ENCODE measurements at regions of chr3 and their contacts with region 1.

Region 1: DNA sequence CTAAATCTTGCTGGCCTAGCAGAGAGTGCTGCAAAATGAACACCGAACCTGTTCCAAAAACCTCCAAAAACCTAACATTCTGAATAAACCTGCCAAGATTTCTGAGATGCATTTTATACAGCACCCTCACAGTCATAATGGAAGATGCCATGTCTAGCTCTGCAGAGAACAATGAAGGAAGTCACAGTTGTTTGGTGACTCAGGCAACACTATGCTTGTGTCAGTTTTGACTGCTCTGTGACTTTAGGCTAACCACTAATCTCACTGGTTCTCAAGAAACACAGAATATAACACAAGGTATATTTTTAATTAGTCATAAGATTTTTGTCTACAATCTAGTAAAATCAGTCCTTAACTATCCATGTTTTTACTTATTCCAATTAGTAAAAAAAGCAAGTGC is 606.6 kb downstream of the TBL1XR1 start:
- DNase-seq: peak; percentile 26
- ATAC-seq: peak; percentile 87
- H3K4me3 ChIP-seq: no peak overlapping the region
- H3K27ac ChIP-seq: no peak overlapping the region
- H3K4me1 ChIP-seq: no peaks in the 10 kb centered on the region
- H3K27me3 ChIP-seq: no peaks in the 10 kb centered on the region
- CTCF ChIP-seq: no peak

Region 2: GRCh38 chr3:176611703-176612102 is 21.0 kb after region 1 on chr3:
- CTCF ChIA-PET with region 1: no interaction called
- POLR2A ChIA-PET with region 1: no interaction called
- intact Hi-C with region 1: loop called (anchors 2 kb)
- DNase-seq: no peak
- ATAC-seq: no peak
- H3K4me3 ChIP-seq: no peak overlapping the region
- H3K27ac ChIP-seq: no peak overlapping the region
- H3K4me1 ChIP-seq: peaks cover 6% of the 10 kb centered on the region
- H3K27me3 ChIP-seq: no peaks in the 10 kb centered on the region
- CTCF ChIP-seq: no peak

Region 3: GRCh38 chr3:176699288-176699687 is 108.6 kb after region 1 on chr3:
- CTCF ChIA-PET with region 1: no interaction called
- POLR2A ChIA-PET with region 1: no interaction called
- intact Hi-C with region 1: no loop called
- DNase-seq: no peak
- ATAC-seq: no peak
- H3K4me3 ChIP-seq: no peak overlapping the region
- H3K27ac ChIP-seq: no peak overlapping the region
- H3K4me1 ChIP-seq: no peaks in the 10 kb centered on the region
- H3K27me3 ChIP-seq: 0 out of 2 replicates have a peak, but pooled peaks cover 3% of the 10 kb centered on the region
- CTCF ChIP-seq: no peak

Measured in PC-3 (cell line).